ENCODE measurements at regions of chr10 and their contacts with region 1.

Region 1: GRCh38 chr10:91251430-91252056 is 31.1 kb downstream of the PCGF5 start:
- H3K4me3 Mint-ChIP-seq: no peak overlapping the region
- H3K27ac Mint-ChIP-seq: no peak overlapping the region
- H3K4me1 Mint-ChIP-seq: no peaks in the 10 kb centered on the region
- H3K27me3 Mint-ChIP-seq: no peaks in the 10 kb centered on the region

Region 2: GRCh38 chr10:90912174-90912573 is 339.4 kb before region 1 on chr10:
- intact Hi-C with region 1: loop called (anchors 1 kb)
- H3K4me3 Mint-ChIP-seq: no peak overlapping the region
- H3K27ac Mint-ChIP-seq: no peak overlapping the region
- H3K4me1 Mint-ChIP-seq: no peaks in the 10 kb centered on the region
- H3K27me3 Mint-ChIP-seq: peaks cover 4% of the 10 kb centered on the region

Region 3: DNA sequence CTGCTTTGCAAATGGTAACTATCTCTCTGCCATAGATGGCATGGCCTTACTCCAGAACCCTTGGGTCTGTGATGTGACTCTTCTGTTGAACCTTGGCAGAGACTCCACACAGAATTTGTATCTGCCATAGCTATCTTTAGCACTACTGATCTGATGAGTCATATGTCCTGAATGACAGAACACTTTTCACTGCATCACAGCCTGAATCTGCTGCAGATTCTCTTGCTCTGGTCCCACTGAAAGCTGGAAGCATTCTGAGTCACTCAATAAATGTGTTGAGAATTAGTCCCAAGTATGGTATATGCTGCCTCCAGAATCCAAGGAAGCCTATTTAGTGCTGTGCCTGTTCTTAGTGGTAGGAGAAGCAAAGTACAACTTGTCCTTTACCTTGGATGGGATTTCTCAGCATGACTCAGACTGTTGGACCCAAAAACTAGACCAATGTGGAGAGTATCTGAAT is 291.2 kb before region 1 on chr10:
- intact Hi-C with region 1: no loop called
- H3K4me3 Mint-ChIP-seq: no peak overlapping the region
- H3K27ac Mint-ChIP-seq: no peak overlapping the region
- H3K4me1 Mint-ChIP-seq: no peaks in the 10 kb centered on the region
- H3K27me3 Mint-ChIP-seq: no peaks in the 10 kb centered on the region

Region 4: DNA sequence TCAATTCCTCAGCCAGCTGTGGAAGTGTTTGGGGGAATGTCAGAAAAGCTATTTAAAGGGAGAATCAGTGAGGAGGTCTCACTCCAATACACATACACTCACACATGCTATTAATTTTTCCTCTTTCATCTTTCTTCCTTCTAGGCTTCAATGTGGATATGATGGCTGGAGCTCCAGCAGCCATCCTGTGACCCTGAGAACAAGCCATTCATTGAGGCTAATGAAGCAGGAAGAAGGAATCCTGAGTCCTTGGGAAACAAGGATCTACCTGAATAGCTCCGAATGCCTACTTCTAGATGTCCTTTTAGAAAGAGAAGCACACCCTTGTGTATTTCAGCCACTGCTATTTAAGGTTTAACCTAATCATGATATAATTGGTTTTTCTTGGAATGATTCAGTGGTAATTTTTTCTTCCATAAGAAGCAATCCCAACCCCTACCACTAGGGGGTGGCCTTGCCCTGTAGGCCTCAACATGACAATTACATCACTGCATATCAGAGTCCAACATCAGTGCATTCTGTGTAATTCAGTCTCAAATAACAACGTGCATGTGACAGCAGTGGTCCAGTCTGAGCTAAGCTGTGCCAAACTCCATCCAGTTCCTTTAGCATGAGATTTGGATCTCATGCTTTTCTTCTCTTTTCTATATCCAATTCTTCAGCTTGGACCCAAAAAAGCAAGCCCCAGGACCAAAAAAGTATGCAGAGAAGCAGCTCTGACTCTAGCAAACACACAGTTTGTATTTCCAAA is 245.4 kb before region 1 on chr10:
- intact Hi-C with region 1: loop called (anchors 1 kb)
- H3K4me3 Mint-ChIP-seq: no peak overlapping the region
- H3K27ac Mint-ChIP-seq: no peak overlapping the region
- H3K4me1 Mint-ChIP-seq: peaks cover 6% of the 10 kb centered on the region
- H3K27me3 Mint-ChIP-seq: no peaks in the 10 kb centered on the region

Region 5: DNA sequence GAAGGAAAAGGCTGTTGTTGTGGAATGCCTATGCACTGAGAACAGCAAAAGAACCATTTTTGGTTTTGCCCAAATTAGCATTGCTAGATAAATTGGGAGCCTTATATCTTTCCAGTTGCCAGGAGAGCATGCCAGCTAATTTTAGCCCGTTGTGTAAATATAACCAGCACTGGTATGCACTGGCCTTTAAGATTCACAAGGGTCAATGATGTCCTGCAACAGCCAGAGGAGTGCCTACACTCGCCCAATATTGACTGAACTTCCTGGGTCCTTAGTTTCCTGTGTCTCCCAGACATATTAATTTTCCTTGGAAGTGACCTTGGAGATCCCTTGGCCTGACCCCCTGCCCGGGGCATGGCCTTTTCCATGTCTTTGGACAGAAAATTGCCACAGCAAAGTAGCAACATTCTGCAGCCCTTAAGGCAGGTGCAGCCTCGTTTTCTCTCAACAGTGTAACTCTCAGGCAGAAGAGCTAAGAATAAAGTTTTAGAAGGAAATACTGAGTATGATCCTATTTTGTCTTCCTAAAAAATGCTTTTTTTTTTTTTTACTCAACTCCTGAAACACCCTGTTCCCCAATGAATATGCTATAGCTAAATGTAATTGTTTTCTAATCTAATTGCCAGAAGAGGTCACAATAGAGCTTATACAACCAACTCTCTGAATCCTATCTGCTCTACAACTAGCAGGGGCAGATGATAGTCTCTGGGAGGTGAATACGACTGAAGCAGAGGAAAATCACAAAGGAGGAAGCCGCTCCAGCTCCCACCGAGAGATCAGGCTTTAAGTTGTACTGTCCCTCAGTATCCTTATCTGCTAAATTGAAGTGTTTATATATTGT is 163.0 kb before region 1 on chr10:
- intact Hi-C with region 1: loop called (anchors 1 kb)
- H3K4me3 Mint-ChIP-seq: no peak overlapping the region
- H3K27ac Mint-ChIP-seq: no peak overlapping the region
- H3K4me1 Mint-ChIP-seq: no peaks in the 10 kb centered on the region
- H3K27me3 Mint-ChIP-seq: peaks cover 2% of the 10 kb centered on the region

Region 6: DNA sequence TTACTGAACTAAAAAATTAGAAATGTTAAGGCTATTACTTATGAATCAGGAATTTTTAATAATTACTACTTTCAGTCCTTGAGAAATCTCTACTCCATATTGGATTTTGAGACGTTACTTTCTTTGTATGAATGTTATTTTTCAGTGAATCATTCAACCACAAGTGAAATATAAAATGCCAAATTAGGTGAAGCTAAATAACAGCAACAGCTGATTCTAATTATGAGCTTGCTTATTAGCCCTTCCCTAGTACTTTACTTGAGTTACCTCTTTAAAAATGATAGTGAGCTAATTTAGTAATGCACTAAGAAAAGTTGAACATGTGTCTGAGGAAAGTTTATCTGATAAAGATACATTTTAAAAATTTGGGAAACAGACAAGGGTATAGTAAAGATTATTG is 20.3 kb after region 1 on chr10:
- intact Hi-C with region 1: no loop called
- H3K4me3 Mint-ChIP-seq: no peak overlapping the region
- H3K27ac Mint-ChIP-seq: no peak overlapping the region
- H3K4me1 Mint-ChIP-seq: no peaks in the 10 kb centered on the region
- H3K27me3 Mint-ChIP-seq: no peaks in the 10 kb centered on the region